Aorta (tissue), 5 donors: ENCODE measurements at regions of chr16 and their contacts with region 1.

Region 1: DNA sequence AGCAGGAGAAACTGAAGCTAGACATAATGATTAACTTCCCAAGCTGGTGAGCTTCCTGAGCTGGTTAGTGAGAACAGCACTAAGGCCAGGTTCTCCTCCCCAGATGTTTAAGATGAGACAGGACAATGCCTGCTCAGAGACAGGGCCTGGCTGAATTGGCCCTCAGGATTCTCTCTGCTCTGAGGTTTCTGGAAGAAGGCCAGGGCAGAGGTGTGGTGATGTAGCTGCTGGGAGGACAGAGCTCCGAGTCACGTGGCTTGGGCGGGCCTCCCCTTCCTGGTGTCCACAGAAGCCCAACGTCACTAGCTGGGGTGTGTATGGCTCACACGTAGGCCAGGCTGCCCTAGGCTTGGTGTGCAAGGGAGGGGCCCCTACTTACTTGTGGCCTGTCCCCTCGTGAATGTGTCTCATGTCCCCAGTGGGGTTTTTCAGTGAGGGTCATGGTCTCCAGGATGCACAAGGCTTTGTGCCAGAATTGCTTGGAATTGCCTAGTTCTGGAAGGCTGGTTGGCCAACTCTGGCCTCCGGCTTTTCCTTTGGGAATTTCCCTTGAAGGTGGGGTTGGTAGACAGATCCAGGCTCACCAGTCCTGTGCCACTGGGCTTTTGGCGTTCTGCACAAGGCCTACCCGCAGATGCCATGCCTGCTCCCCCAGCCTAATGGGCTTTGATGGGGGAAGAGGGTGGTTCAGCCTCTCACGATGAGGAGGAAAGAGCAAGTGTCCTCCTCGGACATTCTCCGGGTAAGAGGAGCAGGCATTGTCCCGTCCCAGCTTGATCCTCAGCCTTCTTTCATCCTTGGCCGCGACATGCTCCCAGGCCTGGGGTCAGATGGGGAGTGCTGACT is 3.4 kb downstream of the NOD2 start:
- DNase-seq: peak; percentile 89 to 92
- ATAC-seq: peak; percentile 63
- H3K4me3 ChIP-seq: no peak overlapping the region
- H3K27ac ChIP-seq: no peak overlapping the region
- H3K4me1 ChIP-seq: no peaks in the 10 kb centered on the region
- H3K27me3 ChIP-seq: no peaks in the 10 kb centered on the region

Region 2: GRCh38 chr16:50741808-50742575 is 45.2 kb after region 1 on chr16 and contains the start of gene CYLD:
- intact Hi-C with region 1: loop called in 1 of 2 experiments (anchors 5 kb)
- DNase-seq: peak; percentile 100
- ATAC-seq: peak; percentile 99
- H3K4me3 ChIP-seq: peak within 1 kb of the TSS; percentile 79 to 93
- H3K27ac ChIP-seq: peak within 1 kb of the TSS; percentile 16 to 89
- H3K4me1 ChIP-seq: peaks cover 0 to under 1% of the 10 kb centered on the region in 2 donors
- H3K27me3 ChIP-seq: no peaks in the 10 kb centered on the region
- total RNA-seq, gene CYLD: 59.0 to 65.1 TPM